Breast epithelium (tissue), 4 donors: ENCODE measurements at regions of chr1 and their contacts with region 1.

Region 1: DNA sequence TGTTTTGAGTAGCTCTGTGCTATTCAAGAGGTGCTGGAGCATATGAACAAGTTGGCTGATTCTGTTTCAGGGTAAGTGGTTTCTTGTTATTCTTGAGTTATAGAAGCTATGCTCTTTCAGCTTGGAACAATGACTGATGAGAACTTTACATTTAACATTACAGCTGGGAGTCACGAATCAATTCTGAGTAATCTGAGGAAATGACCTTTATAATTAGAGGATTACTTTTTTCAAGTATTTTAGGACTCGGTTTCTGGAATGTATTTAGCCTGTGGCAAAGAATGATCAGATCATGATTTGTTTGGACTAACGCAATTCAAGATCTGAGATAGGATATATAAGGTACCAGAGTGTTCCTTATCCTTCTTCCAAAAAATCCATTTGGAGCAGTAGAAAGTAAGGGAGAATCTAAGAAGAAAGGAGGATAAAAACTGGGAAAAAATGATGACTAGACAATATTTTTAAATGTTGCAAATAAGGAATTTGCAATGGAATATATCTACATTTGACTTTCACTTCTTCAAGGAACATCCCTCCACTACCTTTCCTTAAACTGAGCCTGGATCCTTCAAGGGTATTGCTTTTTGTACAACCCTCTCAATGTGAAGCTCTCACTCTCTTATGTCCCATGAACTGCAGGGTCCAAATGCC is 77.1 kb upstream of the KCTD3 start:
- DNase-seq: no peak
- H3K4me3 ChIP-seq: no peak overlapping the region
- H3K27ac ChIP-seq: no peak overlapping the region
- H3K4me1 ChIP-seq: no peaks in the 10 kb centered on the region
- H3K27me3 ChIP-seq: no peaks in the 10 kb centered on the region
- CTCF ChIP-seq: no peak
- POLR2A ChIP-seq: no peak

Region 2: GRCh38 chr1:215507119-215507518 is 17.1 kb after region 1 on chr1:
- intact Hi-C with region 1: loop called (anchors 2 kb)
- DNase-seq: no peak
- H3K4me3 ChIP-seq: no peak overlapping the region
- H3K27ac ChIP-seq: no peak overlapping the region
- H3K4me1 ChIP-seq: no peaks in the 10 kb centered on the region
- H3K27me3 ChIP-seq: no peaks in the 10 kb centered on the region
- CTCF ChIP-seq: no peak
- POLR2A ChIP-seq: no peak